Stomach (tissue), 19 donors: ENCODE measurements at regions of chr19 and their contacts with region 1.

Region 1: DNA sequence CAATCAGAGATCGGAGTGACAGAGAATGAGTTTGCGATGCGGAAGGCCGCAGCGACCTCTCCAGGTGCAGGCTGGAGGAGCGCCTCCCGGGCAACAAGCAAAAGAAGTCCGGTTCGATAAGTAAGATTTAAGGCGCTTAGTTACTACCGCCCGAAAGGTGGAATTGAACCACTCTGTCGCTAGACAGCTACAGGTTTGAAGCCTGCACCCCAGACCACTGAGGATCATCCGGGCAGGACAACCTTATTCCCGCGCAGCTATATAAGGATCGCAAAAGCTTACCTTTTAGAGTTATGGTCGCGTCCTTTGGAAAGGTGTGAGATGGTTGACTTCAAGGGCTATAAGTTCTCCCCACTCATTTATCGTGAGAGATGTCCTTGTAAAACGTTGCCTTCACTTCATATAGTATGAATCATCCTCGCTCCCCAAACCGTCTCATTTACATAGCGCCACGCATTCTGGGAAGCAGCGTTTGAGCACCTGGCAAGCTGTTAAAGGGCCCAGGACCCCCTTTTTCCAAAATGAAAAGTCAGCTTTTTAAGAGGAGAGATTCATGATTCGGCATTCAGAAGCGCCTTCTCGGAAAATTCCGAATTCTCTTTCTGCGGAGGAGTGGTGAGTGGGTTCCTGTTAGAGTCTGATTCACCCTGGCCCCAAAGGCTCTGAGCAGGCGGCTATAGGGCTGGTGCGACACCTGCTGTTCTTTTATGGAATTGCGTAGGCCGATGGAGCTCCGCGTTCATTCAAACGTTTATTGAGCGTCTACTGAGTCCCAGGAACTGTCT is 10.8 kb downstream of the FOSB start:
- DNase-seq: peak; percentile 86 to 95
- H3K4me3 ChIP-seq: peak overlapping the region; percentile 45 to 53 (median 46)
- H3K27ac ChIP-seq: peak overlapping the region; percentile 85 to 98 (median 95)
- H3K4me1 ChIP-seq: peaks cover 7 to 22% (median 11%) of the 10 kb centered on the region in 4 donors
- H3K27me3 ChIP-seq: peaks cover 0 to 15% (median 4%) of the 10 kb centered on the region in 3 donors
- CTCF ChIP-seq: peak in 5 of 7 experiments; percentile 96 to 100 (median 97)
- EP300 ChIP-seq: no peak
- POLR2A ChIP-seq: no peak

Region 2: GRCh38 chr19:45439569-45440254 is 38.9 kb before region 1 on chr19:
- intact Hi-C with region 1: loop called (anchors 5 kb)
- DNase-seq: peak; percentile 85 to 95
- H3K4me3 ChIP-seq: peak overlapping the region; percentile 57 to 77 (median 64)
- H3K27ac ChIP-seq: peak overlapping the region; percentile 88 to 97 (median 93)
- H3K4me1 ChIP-seq: peaks cover 10 to 44% (median 31%) of the 10 kb centered on the region in 4 donors
- H3K27me3 ChIP-seq: no peaks in the 10 kb centered on the region
- CTCF ChIP-seq: peak in 6 of 7 experiments; percentile 69 to 100 (median 98)
- EP300 ChIP-seq: no peak
- POLR2A ChIP-seq: no peak